Spleen (tissue), 13 donors: ENCODE measurements at regions of chr3 and their contacts with region 1.

Region 1: GRCh38 chr3:171459942-171460724 is at the start of gene TNIK:
- DNase-seq: peak; percentile 94
- H3K4me3 ChIP-seq: peak within 1 kb of the TSS; percentile 59 to 96 (median 74)
- H3K27ac ChIP-seq: peak within 1 kb of the TSS; percentile 29 to 87 (median 76)
- H3K4me1 ChIP-seq: peaks cover 10 to 68% (median 37%) of the 10 kb centered on the region in 6 donors
- H3K27me3 ChIP-seq: peaks cover 0 to 70% (median 0%) of the 10 kb centered on the region in 7 donors
- CTCF ChIP-seq: peak in 4 of 11 experiments; percentile 25 to 28 (median 26)
- POLR2A ChIP-seq: peak in 1 of 3 donors; percentile 19
- total RNA-seq, gene TNIK: 9.0 to 34.5 (median 19.4) TPM

Region 2: GRCh38 chr3:169966428-169966950 is 1493.6 kb before region 1 on chr3 and contains the start of gene SEC62:
- intact Hi-C with region 1: no loop called
- DNase-seq: peak; percentile 99
- H3K4me3 ChIP-seq: peak within 1 kb of the TSS; percentile 70 to 87 (median 72)
- H3K27ac ChIP-seq: peak within 1 kb of the TSS; percentile 96 to 98 (median 98)
- H3K4me1 ChIP-seq: peaks cover 40 to 75% (median 52%) of the 10 kb centered on the region in 6 donors
- H3K27me3 ChIP-seq: no peaks in the 10 kb centered on the region
- CTCF ChIP-seq: peak in 9 of 11 experiments; percentile 28 to 71 (median 54)
- POLR2A ChIP-seq: peak; percentile 36 to 89 (median 83)
- total RNA-seq, gene SEC62: 56.8 to 178 (median 132) TPM

Region 3: GRCh38 chr3:171157286-171157685 is 302.8 kb before region 1 on chr3:
- intact Hi-C with region 1: no loop called
- DNase-seq: no peak
- H3K4me3 ChIP-seq: no peak overlapping the region
- H3K27ac ChIP-seq: no peak overlapping the region
- H3K4me1 ChIP-seq: no peaks in the 10 kb centered on the region
- H3K27me3 ChIP-seq: no peaks in the 10 kb centered on the region
- CTCF ChIP-seq: peak in 1 of 11 experiments; percentile 7
- POLR2A ChIP-seq: no peak

Region 4: DNA sequence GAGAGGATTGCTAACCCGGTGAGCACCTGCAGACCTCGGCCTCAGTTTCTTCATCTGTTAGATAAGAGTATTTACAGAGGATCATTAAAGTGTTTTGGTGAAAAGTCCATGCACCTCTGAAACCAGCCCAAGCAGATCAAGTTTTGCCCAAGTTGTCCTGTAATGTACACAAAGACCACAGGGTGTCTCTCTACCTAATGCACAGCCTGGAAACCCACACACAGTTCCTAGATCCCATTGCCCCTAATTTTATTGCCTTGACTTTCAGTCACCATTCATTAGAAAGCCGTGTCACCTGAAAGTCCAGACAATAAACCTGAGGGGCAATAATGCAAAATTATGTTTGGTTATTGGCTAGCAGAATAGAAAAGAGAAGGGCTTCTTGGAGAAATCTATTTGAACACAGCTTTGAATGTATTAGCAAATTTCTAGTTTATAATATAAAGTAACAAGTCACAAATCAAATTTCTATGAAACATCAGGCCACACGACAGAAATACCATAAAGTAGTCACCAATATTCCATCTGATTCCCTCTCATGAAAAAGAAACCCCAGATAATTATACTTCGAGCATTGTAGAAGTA is 272.3 kb before region 1 on chr3:
- intact Hi-C with region 1: loop called (anchors 10 kb)
- DNase-seq: no peak
- H3K4me3 ChIP-seq: no peak overlapping the region
- H3K27ac ChIP-seq: no peak overlapping the region
- H3K4me1 ChIP-seq: peaks cover 0 to 8% (median 0%) of the 10 kb centered on the region in 6 donors
- H3K27me3 ChIP-seq: no peaks in the 10 kb centered on the region
- CTCF ChIP-seq: peak in 9 of 11 experiments; percentile 20 to 73 (median 54)
- POLR2A ChIP-seq: no peak

Region 5: DNA sequence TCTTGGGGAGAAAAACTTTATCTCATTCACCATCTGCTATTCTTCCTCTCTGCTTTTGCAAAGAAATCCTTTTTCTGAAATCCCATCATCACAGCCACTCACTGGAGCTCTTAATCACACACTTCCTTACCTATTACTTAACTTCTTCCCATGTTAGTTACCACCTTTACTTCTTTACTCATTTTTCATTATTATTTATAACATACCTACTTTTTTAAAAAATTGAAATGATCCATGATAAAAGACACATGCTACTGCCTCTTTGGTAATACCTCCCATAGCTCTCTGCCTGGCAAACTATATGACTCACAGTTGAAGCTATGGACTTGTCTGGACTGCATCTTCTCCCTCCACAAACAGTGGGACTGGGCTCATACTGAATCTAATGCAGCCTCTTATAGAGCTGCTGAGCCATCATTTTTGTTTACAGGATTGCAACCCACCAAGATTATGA is 150.2 kb before region 1 on chr3:
- intact Hi-C with region 1: no loop called
- DNase-seq: no peak
- H3K4me3 ChIP-seq: no peak overlapping the region
- H3K27ac ChIP-seq: no peak overlapping the region
- H3K4me1 ChIP-seq: peaks cover 0 to 6% (median 0%) of the 10 kb centered on the region in 6 donors
- H3K27me3 ChIP-seq: no peaks in the 10 kb centered on the region
- CTCF ChIP-seq: no peak
- POLR2A ChIP-seq: no peak

Region 6: DNA sequence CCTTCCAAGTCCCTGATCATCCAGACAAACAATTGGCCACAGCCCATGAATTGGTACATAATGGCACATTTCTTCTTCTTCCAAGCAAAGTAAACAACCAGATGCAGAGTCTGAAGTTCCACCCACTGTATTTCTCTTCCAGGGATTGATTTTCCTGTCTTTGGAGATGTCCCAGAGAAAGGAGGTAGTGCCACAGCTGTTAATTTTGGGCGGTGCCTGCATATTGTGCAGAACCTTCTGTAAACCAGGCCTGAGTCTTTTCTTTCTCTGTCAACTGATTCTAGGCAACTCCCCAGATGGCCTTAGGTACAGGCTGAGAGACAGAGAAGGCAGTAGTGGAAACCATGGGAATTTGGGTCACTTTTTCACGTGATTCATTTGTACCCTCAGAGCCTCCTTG is 73.6 kb after region 1 on chr3:
- intact Hi-C with region 1: no loop called
- DNase-seq: no peak
- H3K4me3 ChIP-seq: no peak overlapping the region
- H3K27ac ChIP-seq: no peak overlapping the region
- H3K4me1 ChIP-seq: no peaks in the 10 kb centered on the region
- H3K27me3 ChIP-seq: no peaks in the 10 kb centered on the region
- CTCF ChIP-seq: no peak
- POLR2A ChIP-seq: no peak